ENCODE measurements at regions of chr7 and their contacts with region 1.

Region 1: GRCh38 chr7:34759452-34760125 is 101.6 kb downstream of the NPSR1 start:
- DNase-seq: no peak
- H3K4me3 ChIP-seq: no peak overlapping the region
- H3K27ac ChIP-seq: no peak overlapping the region
- H3K27me3 ChIP-seq: no peaks in the 10 kb centered on the region
- CTCF ChIP-seq: peak; percentile 26 to 77 (median 66)

Region 2: DNA sequence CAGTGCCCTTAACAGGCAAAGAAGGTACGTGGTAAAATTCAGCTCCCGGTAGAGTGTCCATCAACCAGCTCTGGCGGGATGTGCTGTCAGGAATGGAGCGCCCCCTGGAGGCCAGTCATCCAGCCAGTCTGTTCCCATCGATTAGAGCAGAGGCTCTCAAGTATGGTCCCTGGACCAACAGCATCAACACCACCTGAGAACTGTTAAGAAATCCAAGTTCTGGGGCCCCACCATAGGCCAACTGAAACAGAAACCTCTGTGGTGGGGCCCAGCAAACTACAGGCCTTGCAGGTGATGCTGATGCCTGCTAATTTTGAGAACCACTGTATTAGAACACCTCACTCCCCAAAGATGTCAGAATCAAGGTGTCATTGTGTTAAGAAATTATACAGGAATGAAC is 168.5 kb after region 1 on chr7:
- intact Hi-C with region 1: loop called in 1 of 2 experiments (anchors 2 kb)
- DNase-seq: peak; percentile 25 to 91 (median 76)
- H3K4me3 ChIP-seq: peak overlapping the region in 1 of 59 donors; percentile 27
- H3K27ac ChIP-seq: no peak overlapping the region
- H3K27me3 ChIP-seq: no peaks in the 10 kb centered on the region
- CTCF ChIP-seq: peak in 55 of 56 donors; percentile 43 to 93 (median 77)

Measured in dorsolateral prefrontal cortex (tissue), 120 donors.